ENCODE measurements at regions of chr13 and their contacts with region 1.

Region 1: DNA sequence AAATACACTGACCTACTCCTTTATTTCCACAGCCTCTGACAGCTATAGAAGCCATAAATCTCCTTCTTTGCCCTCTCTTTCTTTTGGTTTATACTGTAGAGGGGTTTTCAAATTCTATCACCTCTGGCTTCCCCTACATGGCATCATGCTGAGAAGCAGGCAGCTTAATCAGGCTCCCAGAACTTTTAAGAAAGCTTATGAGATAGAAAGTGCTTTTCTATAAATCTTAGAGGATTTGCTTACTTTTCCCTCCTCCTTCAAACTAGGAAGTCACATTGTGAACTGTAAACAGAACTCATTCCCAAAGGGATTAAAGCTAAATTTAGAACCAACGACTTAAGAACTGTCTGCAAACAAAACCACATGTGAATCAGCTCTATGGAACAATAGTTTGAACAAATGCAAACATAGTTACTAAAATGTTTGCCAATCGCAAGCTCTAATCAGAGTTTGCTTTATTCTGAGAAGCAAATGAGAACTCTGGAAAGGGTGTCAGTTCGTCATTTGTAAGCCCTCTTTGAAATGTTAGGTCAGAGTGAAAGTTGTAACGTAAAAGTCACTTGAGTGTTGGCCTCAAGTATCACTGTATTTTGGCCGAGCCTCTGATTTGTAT is 344.1 kb downstream of the RFC3 start:
- DNase-seq: no peak
- ATAC-seq: peak; percentile 58 to 79 (median 64)
- H3K4me3 ChIP-seq: peak overlapping the region in 7 of 12 donors; percentile 2 to 40 (median 15)
- H3K27ac ChIP-seq: peak overlapping the region; percentile 34 to 82 (median 63)
- H3K4me1 ChIP-seq: peaks cover 0 to 28% (median 21%) of the 10 kb centered on the region in 12 donors
- H3K27me3 ChIP-seq: no peaks in the 10 kb centered on the region
- CTCF ChIP-seq: no peak
- POLR2A ChIP-seq: no peak

Region 2: DNA sequence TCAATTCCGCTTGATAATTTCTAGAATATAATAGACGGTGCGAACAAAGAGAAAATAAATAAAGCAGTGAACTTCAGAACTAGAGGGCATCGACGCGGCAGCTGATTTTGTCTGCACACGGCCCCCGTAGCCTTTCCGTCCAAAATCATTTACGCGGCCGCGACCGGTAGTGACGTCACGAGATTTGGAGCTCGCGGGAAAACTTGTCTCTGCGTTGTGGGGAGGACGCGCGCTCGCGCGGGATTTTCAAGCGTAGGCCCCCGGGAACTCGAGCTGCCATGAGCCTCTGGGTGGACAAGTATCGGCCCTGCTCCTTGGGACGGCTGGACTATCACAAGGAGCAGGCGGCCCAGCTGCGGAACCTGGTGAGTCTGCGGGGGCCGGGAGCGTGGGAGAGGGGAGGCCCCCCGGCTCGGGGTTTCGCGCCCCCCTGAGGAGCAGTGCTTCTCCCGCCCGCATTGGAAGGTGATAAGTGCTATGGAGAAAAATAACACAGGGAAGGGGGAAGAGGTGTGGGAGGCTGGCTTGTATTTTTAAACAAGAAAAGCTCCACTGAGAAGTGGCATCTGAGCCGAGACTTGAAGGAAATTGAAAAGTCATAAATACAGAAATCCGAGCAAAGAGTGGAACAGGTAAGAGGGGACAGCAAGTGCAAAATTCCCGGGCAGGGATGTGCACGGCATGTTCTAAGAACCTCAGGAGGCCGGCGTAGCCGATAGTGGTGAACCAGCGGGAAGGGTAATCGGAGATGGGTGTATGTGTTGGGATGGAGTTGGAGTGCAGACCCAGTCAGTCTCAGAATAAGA is 343.9 kb before region 1 on chr13 and contains the start of gene RFC3:
- intact Hi-C with region 1: loop called in 1 of 10 experiments (anchors 10 kb)
- DNase-seq: peak; percentile 94 to 96 (median 95)
- ATAC-seq: peak; percentile 92 to 98 (median 96)
- H3K4me3 ChIP-seq: peak within 1 kb of the TSS; percentile 62 to 95 (median 80)
- H3K27ac ChIP-seq: peak within 1 kb of the TSS; percentile 18 to 84 (median 72)
- H3K4me1 ChIP-seq: peaks cover 0 to 16% (median 7%) of the 10 kb centered on the region in 12 donors
- H3K27me3 ChIP-seq: no peaks in the 10 kb centered on the region
- CTCF ChIP-seq: no peak
- POLR2A ChIP-seq: peak in 1 of 2 donors; percentile 42
- total RNA-seq, gene RFC3: 3.4 to 8.8 (median 5.7) TPM

Region 3: GRCh38 chr13:34696296-34696695 is 534.3 kb after region 1 on chr13:
- intact Hi-C with region 1: no loop called
- DNase-seq: no peak
- ATAC-seq: no peak
- H3K4me3 ChIP-seq: no peak overlapping the region
- H3K27ac ChIP-seq: no peak overlapping the region
- H3K4me1 ChIP-seq: peaks cover 0 to 13% (median 0%) of the 10 kb centered on the region in 12 donors
- H3K27me3 ChIP-seq: no peaks in the 10 kb centered on the region
- CTCF ChIP-seq: no peak
- POLR2A ChIP-seq: no peak